Prostate gland (tissue), 2 donors: ENCODE measurements at regions of chr15 and their contacts with region 1.

Region 1: DNA sequence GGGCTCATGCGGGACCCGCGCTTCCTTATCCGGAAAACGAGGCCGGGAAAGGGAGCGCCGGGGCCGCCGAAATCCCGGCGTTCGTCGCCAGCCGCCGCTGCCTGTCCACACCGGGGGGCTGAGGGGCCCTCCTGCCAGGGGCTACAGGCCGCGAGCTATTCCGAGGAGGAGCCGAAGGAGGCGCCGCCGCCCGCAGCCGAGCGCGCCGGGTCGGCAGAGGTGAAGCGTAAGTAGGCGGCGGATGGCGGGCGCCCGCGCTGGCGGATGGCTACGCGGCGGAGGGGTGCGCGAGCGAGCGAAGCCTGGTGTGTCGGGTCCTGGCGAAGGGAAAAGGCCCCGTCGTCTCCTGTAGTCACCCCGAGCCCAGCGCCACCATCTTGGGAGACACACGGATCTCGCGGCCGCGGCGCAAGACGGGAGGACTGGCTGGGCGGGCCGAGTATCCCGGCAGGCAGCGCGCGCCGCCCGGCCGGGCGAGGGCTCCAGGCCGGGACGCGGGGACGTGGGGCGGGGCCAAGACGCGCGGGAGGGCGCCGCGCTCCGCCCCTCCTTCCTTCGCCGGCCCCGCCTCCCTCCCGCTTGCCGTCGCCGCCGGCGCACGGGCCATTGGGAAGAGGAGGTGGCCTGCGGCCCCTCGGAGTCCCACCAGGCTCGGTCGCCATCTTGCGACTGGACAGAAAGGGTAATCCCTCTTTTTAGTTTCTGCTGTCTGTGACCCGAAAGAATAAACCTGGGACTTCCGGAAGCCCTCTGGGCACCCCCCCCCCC is at the start of gene UBE3A:
- DNase-seq: peak; percentile 87
- H3K4me3 ChIP-seq: peak within 1 kb of the TSS; percentile 93 to 100
- H3K27ac ChIP-seq: peak within 1 kb of the TSS; percentile 95 to 99
- H3K4me1 ChIP-seq: no peaks in the 10 kb centered on the region
- H3K27me3 ChIP-seq: no peaks in the 10 kb centered on the region
- CTCF ChIP-seq: peak in 3 of 4 experiments; percentile 16 to 53 (median 36)
- POLR2A ChIP-seq: peak; percentile 68
- total RNA-seq, gene UBE3A: 61.1 to 79.8 TPM

Region 2: GRCh38 chr15:24956111-24956838 is 482.5 kb before region 1 on chr15:
- intact Hi-C with region 1: loop called (anchors 5 kb)
- DNase-seq: peak; percentile 75
- H3K4me3 ChIP-seq: peak overlapping the region; percentile 61 to 65
- H3K27ac ChIP-seq: peak overlapping the region; percentile 80 to 90
- H3K4me1 ChIP-seq: no peaks in the 10 kb centered on the region
- H3K27me3 ChIP-seq: no peaks in the 10 kb centered on the region
- CTCF ChIP-seq: no peak
- POLR2A ChIP-seq: peak; percentile 16

Region 3: DNA sequence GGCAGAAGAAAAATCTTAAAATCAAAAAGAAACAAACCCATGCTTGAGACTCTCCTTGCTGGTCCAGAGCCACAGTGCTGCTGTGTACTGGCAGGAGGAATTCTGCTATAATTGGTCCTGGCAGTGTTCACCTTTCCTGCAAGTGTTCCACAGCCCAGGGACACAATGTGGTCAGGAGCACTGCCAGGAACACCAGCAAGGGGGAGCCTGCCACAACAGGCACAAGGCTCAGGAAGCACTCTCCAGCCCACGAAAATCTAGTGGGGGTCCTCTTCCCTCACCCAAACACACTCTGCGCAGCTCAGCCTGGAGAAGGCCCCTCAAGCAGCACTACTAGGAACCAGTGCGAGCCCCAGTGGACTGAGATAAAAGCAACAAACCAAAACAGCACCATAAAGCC is 92.8 kb before region 1 on chr15:
- intact Hi-C with region 1: loop called (anchors 5 kb)
- DNase-seq: peak; percentile 47
- H3K4me3 ChIP-seq: no peak overlapping the region
- H3K27ac ChIP-seq: no peak overlapping the region
- H3K4me1 ChIP-seq: no peaks in the 10 kb centered on the region
- H3K27me3 ChIP-seq: no peaks in the 10 kb centered on the region
- CTCF ChIP-seq: peak in 1 of 4 experiments; percentile 10
- POLR2A ChIP-seq: no peak

Region 4: GRCh38 chr15:25587616-25588340 is 149.0 kb after region 1 on chr15:
- intact Hi-C with region 1: no loop called
- DNase-seq: no peak
- H3K4me3 ChIP-seq: no peak overlapping the region
- H3K27ac ChIP-seq: no peak overlapping the region
- H3K4me1 ChIP-seq: no peaks in the 10 kb centered on the region
- H3K27me3 ChIP-seq: no peaks in the 10 kb centered on the region
- CTCF ChIP-seq: no peak
- POLR2A ChIP-seq: no peak

Region 5: DNA sequence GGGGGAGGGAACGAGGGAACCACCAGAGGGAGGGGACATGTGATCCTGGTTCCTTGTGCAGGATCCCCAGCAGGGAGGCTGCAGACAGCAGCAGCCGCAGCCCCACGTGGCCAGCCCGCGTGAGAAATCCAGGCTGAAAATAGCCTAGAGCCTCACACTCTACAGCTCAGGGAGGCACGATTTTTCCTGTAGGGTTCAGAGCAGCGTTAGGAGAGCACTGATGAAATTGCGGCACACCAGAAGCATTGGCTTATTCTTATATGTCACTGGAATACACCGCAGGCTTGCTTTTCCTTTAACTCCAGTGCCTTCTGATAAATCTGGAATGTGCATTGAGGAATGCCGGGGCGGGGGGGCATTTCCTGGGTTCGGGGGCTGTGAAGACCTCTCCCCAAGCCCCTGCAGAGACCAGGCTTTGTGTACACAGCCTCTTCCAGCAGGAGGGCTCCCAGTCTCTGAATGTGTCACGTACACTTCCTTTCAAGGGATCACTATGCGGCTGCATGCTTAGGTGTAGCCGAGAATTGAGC is 231.3 kb after region 1 on chr15:
- intact Hi-C with region 1: loop called (anchors 10 kb)
- DNase-seq: peak; percentile 17
- H3K4me3 ChIP-seq: no peak overlapping the region
- H3K27ac ChIP-seq: peak overlapping the region in 1 of 2 donors; percentile 35
- H3K4me1 ChIP-seq: no peaks in the 10 kb centered on the region
- H3K27me3 ChIP-seq: no peaks in the 10 kb centered on the region
- CTCF ChIP-seq: no peak
- POLR2A ChIP-seq: no peak